Activated B cell treated with CpG ODN at 0.5 μM for 24 hours (primary cell): ENCODE measurements at regions of chr21 and their contacts with region 1.

Region 1: DNA sequence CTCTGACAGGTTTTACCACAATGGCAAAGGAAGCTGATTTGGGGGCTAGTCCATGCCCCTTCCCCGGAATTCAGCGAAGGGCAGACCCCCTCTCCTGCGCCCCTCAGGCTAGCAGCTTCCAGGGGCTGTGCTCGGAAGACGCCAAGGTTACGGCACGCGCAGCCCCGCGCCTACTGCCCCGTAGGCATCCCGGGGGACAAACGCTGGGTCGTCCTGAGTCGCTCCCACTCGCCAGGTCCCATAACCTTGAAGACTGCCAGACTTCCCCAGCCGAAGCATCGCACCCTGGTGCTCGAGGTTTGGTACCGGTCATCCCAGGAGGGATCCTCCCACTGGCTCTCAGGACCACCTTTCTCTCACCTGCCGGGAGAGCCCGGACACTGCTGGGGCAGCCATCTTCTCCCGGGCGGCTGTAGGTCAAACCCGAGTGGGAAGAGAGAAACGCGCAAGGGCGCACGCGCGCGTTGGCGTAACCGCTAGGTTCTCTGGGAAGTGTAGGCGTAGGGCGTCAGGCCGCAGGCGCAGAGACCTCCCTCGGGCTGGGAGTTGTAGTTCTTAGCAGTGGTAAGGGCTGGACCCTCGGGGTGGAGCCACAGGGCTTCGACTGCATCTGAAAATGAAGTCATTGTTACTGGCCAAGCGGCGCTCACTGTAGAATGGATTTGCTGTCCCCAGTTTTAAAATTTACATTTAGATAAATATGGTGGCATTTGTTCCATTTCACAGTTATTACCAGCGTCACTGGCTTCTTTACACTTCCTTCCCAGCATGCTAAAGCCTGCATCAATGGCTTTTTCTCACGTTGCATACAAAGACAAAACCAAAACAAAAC is at the start of gene ATP5PO:
- DNase-seq: peak; percentile 91
- ATAC-seq: peak; percentile 100
- H3K4me3 Mint-ChIP-seq: peak within 1 kb of the TSS; percentile 99
- H3K27ac Mint-ChIP-seq: peak within 1 kb of the TSS; percentile 96
- H3K4me1 Mint-ChIP-seq: peaks cover 25% of the 10 kb centered on the region
- H3K27me3 Mint-ChIP-seq: no peaks in the 10 kb centered on the region
- CTCF ChIP-seq: no peak
- total RNA-seq, gene ATP5PO: 169 and 193 TPM in 2 replicates

Region 2: DNA sequence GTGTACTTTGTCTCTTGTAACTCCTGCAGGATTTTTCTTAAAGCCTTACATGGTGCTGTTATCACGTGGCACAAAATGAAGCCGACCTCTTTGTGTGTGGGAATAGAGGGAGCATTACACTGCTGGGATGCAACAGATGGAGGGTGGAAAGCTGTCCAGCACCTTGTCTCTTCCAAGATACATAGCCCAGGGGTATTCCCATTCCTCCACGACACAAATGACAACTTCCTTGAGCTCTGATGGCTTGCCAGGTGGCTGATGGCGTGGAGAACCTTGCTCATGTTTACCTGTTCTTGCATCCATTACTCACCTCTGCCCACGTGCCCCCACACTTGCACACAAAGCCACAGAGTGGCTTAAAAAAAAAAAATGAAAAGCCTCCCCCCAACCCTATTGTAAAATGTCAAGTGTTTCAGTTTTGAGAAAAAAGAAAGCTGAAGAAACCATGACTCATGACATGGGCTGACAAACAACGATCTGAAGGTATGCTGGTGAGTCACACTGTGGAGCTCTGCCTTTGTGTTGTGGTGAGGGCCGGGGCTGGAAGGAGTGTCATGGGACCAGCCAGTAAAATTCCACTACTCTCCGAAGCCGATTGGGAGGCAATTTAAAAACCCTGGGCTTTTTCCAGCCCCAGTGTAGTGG is 32.0 kb after region 1 on chr21:
- CTCF ChIA-PET with region 1: no interaction called
- POLR2A ChIA-PET with region 1: interaction called, 4 read pairs
- intact Hi-C with region 1: loop called (anchors 1 kb)
- DNase-seq: peak; percentile 36
- ATAC-seq: peak; percentile 74
- H3K4me3 Mint-ChIP-seq: peak overlapping the region; percentile 75
- H3K27ac Mint-ChIP-seq: peak overlapping the region; percentile 92
- H3K4me1 Mint-ChIP-seq: peaks cover 55% of the 10 kb centered on the region
- H3K27me3 Mint-ChIP-seq: no peaks in the 10 kb centered on the region
- CTCF ChIP-seq: no peak

Region 3: GRCh38 chr21:34351786-34352241 is 436.2 kb after region 1 on chr21:
- CTCF ChIA-PET with region 1: interaction called, 431 read pairs
- POLR2A ChIA-PET with region 1: interaction called, 3 read pairs
- intact Hi-C with region 1: no loop called
- DNase-seq: no peak
- ATAC-seq: peak; percentile 80
- H3K4me3 Mint-ChIP-seq: no peak overlapping the region
- H3K27ac Mint-ChIP-seq: no peak overlapping the region
- H3K4me1 Mint-ChIP-seq: peaks cover 3% of the 10 kb centered on the region
- H3K27me3 Mint-ChIP-seq: peaks cover 29% of the 10 kb centered on the region
- CTCF ChIP-seq: no peak

Region 4: GRCh38 chr21:34545079-34545884 is 629.7 kb after region 1 on chr21:
- CTCF ChIA-PET with region 1: no interaction called
- POLR2A ChIA-PET with region 1: no interaction called
- intact Hi-C with region 1: loop called (anchors 10 kb)
- DNase-seq: peak; percentile 28
- ATAC-seq: peak; percentile 80
- H3K4me3 Mint-ChIP-seq: peak overlapping the region; percentile 59
- H3K27ac Mint-ChIP-seq: peak overlapping the region; percentile 82
- H3K4me1 Mint-ChIP-seq: peaks cover 34% of the 10 kb centered on the region
- H3K27me3 Mint-ChIP-seq: no peaks in the 10 kb centered on the region
- CTCF ChIP-seq: no peak

Region 5: DNA sequence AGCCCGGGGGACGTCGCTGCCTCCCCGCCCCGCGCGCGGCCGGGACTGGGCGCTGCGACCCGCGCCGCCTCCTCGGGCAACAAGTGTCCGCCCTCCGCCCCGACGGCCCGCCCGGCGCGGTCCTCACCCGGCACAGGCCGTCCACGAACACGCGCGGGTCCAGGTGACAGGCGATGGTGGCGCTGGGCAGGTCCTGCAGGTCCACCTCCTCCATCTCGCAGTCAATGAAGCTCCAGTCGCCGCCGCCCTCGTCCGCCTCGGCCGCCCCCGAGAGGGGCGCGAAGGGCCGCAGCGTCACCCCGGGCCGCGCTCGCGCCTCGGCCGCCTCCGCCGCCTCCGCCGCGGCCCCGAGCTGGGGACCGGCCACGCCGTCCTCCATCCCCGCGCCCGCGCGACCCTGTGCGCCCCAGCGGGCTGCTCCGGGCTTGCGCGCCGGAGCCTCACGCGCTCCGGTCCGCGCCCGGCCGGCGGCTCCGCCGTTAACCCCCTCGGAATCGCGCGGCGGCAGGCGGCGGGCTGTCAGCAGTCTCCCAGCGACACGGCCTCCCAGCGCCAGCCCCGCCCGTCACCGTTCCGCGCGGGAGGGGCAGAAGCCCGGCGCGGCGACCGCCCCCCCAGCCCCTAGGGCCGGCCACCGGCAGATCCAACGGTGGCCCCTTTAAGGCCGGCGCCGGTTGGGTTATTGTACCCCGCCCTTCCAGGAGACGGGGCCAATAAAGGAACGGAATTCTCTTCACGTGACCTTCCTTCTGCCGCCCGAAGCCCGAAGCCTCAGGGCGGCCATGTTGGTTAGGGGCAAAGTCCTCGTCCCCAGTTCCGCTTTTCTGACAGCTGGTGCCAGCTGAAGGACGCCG is 699.3 kb after region 1 on chr21 and contains the start of gene RCAN1:
- CTCF ChIA-PET with region 1: no interaction called
- POLR2A ChIA-PET with region 1: no interaction called
- intact Hi-C with region 1: loop called (anchors 1 kb)
- DNase-seq: peak; percentile 78
- ATAC-seq: peak; percentile 94
- H3K4me3 Mint-ChIP-seq: peak within 1 kb of the TSS; percentile 82
- H3K27ac Mint-ChIP-seq: peak within 1 kb of the TSS; percentile 82
- H3K4me1 Mint-ChIP-seq: peaks cover 7% of the 10 kb centered on the region
- H3K27me3 Mint-ChIP-seq: peaks cover 1% of the 10 kb centered on the region
- CTCF ChIP-seq: no peak
- total RNA-seq, gene RCAN1: 5.8 and 6.3 TPM in 2 replicates